ENCODE measurements at regions of chr7 and their contacts with region 1.

Region 1: GRCh38 chr7:28272461-28272877 is 91.9 kb upstream of the JAZF1 start:
- DNase-seq: peak; percentile 18 to 42
- ATAC-seq: peak in 5 of 8 donors; percentile 72 to 85 (median 79)
- H3K4me3 ChIP-seq: peak overlapping the region in 6 of 10 donors; percentile 2 to 32 (median 18)
- H3K27ac ChIP-seq: no peak overlapping the region
- H3K4me1 ChIP-seq: peaks cover 0 to 7% (median 0%) of the 10 kb centered on the region in 9 donors
- H3K27me3 ChIP-seq: peaks cover 0 to 6% (median 0%) of the 10 kb centered on the region in 7 donors
- CTCF ChIP-seq: peak; percentile 32 to 84 (median 68)

Region 2: DNA sequence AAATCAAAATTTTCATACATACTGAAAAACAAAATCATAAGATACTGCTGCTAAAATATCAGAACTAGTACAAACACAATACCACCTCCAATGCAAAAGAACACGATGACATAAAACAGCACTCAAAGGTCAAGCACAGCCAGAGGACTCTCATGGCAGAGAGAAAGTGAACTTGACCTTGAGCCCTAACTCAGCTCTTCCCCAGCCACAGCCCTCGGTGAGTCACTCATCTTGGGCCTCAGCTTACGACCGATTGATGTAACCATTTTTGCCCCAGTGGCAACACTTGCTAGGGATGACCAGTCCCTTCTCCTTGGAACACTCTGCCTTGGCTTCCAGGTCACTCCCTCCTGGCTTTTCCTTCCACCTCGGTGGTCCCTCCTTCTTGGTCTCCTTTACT is 169.7 kb before region 1 on chr7:
- intact Hi-C with region 1: loop called in 1 of 10 experiments (anchors 10 kb)
- DNase-seq: no peak
- ATAC-seq: peak; percentile 22 to 81 (median 34)
- H3K4me3 ChIP-seq: no peak overlapping the region
- H3K27ac ChIP-seq: peak overlapping the region; percentile 37 to 93 (median 69)
- H3K4me1 ChIP-seq: peaks cover under 1 to 63% (median 52%) of the 10 kb centered on the region in 9 donors
- H3K27me3 ChIP-seq: no peaks in the 10 kb centered on the region
- CTCF ChIP-seq: no peak

Region 3: GRCh38 chr7:28179120-28180030 is 93.1 kb before region 1 on chr7:
- intact Hi-C with region 1: loop called in 4 of 10 experiments (anchors 5 to 10 kb)
- DNase-seq: peak; percentile 79 to 83
- ATAC-seq: peak; percentile 56 to 83 (median 75)
- H3K4me3 ChIP-seq: peak overlapping the region; percentile 38 to 81 (median 71)
- H3K27ac ChIP-seq: peak overlapping the region; percentile 85 to 93 (median 89)
- H3K4me1 ChIP-seq: peaks cover 0 to 68% (median 44%) of the 10 kb centered on the region in 9 donors
- H3K27me3 ChIP-seq: no peaks in the 10 kb centered on the region
- CTCF ChIP-seq: no peak

Region 4: DNA sequence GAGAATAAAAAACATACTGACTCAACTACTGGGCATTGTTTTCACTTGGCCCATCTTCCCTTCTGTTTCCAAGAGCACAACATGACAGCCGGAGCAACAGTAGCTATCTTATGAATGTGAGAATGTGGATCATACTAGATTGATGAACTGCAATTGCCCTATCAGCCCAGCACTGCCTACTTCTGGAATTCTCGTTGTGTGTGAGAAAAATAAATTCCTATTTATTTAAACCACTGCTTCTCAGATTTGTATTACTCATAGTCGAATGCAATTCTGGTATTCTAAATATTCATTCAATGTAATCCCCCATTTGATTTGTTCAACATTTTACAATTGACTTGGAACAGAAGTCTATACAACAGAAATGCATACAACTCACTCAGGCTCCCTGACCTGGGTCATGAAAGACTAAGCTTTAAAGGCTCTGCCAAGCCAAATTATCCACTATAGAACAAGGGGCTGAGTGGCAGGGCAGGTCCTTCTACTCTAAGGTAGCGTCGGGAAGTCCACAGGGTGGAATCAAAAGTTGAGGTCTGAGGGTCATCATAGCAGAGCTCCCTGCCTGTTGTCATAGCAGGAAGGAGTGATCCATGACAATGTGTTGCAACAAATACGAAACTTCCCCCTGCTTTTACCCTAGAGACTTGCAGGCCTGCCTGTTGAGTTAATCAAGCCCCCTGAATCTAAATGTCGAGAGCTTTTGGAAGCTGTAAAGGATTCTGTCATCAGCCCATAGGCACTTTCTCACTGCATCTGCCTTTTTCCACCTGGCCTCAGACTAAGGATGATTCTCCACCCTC is 79.5 kb before region 1 on chr7:
- intact Hi-C with region 1: loop called in 3 of 10 experiments (anchors 10 kb)
- DNase-seq: no peak
- ATAC-seq: no peak
- H3K4me3 ChIP-seq: no peak overlapping the region
- H3K27ac ChIP-seq: no peak overlapping the region
- H3K4me1 ChIP-seq: peaks cover 0 to 17% (median 0%) of the 10 kb centered on the region in 9 donors
- H3K27me3 ChIP-seq: no peaks in the 10 kb centered on the region
- CTCF ChIP-seq: no peak

Region 5: DNA sequence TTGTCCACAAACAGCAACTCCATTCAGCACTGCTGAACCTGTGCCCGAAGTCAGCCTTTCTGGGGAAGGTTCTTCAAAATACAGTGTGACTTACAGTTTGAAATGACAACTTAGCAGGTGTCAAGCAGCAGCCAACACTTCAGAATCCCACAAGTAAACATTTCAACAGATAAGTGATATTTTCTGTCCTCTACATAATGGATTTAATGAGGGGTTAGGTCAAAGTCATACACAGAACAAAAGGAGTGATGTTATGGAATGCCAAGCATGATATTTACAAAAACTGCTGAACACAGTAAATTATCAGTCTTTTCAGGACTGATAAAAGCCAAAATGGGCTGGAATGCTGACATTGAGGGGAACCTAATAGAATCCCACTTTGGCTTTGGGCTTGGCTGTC is 14.2 kb before region 1 on chr7:
- intact Hi-C with region 1: no loop called
- DNase-seq: no peak
- ATAC-seq: no peak
- H3K4me3 ChIP-seq: no peak overlapping the region
- H3K27ac ChIP-seq: no peak overlapping the region
- H3K4me1 ChIP-seq: no peaks in the 10 kb centered on the region
- H3K27me3 ChIP-seq: peaks cover 0 to 20% (median 6%) of the 10 kb centered on the region in 7 donors
- CTCF ChIP-seq: no peak